H1 (cell line): ENCODE measurements at regions of chr4 and their contacts with region 1.

Region 1: GRCh38 chr4:169810325-169811323 is 52.9 kb upstream of the HPF1 start:
- DNase-seq: no peak
- H3K4me3 ChIP-seq: no peak overlapping the region
- H3K27ac ChIP-seq: no peak overlapping the region
- H3K4me1 ChIP-seq: no peaks in the 10 kb centered on the region
- H3K27me3 ChIP-seq: no peaks in the 10 kb centered on the region
- CTCF ChIP-seq: peak in 2 of 3 experiments; percentile 73 to 77; a peak in 3 of 4 replicates
- EP300 ChIP-seq: no peak
- POLR2A ChIP-seq: no peak
- RAD21 ChIP-seq: peak; percentile 84 to 88

Region 2: GRCh38 chr4:169716677-169717076 is 93.9 kb before region 1 on chr4:
- CTCF ChIA-PET with region 1: no interaction called
- POLR2A ChIA-PET with region 1: no interaction called
- DNase-seq: no peak
- H3K4me3 ChIP-seq: no peak overlapping the region
- H3K27ac ChIP-seq: no peak overlapping the region
- H3K4me1 ChIP-seq: no peaks in the 10 kb centered on the region
- H3K27me3 ChIP-seq: no peaks in the 10 kb centered on the region
- CTCF ChIP-seq: no peak
- EP300 ChIP-seq: no peak
- POLR2A ChIP-seq: no peak
- RAD21 ChIP-seq: no peak

Region 3: GRCh38 chr4:169800541-169800940 is 10.1 kb before region 1 on chr4:
- CTCF ChIA-PET with region 1: interaction called, 17 read pairs
- POLR2A ChIA-PET with region 1: no interaction called
- DNase-seq: no peak
- H3K4me3 ChIP-seq: no peak overlapping the region
- H3K27ac ChIP-seq: no peak overlapping the region
- H3K4me1 ChIP-seq: no peaks in the 10 kb centered on the region
- H3K27me3 ChIP-seq: no peaks in the 10 kb centered on the region
- CTCF ChIP-seq: no peak
- EP300 ChIP-seq: no peak
- POLR2A ChIP-seq: no peak
- RAD21 ChIP-seq: no peak

Region 4: GRCh38 chr4:169840554-169840953 is 29.9 kb after region 1 on chr4:
- CTCF ChIA-PET with region 1: interaction called, 12 read pairs
- POLR2A ChIA-PET with region 1: no interaction called
- DNase-seq: no peak
- H3K4me3 ChIP-seq: no peak overlapping the region
- H3K27ac ChIP-seq: no peak overlapping the region
- H3K4me1 ChIP-seq: no peaks in the 10 kb centered on the region
- H3K27me3 ChIP-seq: no peaks in the 10 kb centered on the region
- CTCF ChIP-seq: no peak
- EP300 ChIP-seq: no peak
- POLR2A ChIP-seq: no peak
- RAD21 ChIP-seq: no peak

Region 5: DNA sequence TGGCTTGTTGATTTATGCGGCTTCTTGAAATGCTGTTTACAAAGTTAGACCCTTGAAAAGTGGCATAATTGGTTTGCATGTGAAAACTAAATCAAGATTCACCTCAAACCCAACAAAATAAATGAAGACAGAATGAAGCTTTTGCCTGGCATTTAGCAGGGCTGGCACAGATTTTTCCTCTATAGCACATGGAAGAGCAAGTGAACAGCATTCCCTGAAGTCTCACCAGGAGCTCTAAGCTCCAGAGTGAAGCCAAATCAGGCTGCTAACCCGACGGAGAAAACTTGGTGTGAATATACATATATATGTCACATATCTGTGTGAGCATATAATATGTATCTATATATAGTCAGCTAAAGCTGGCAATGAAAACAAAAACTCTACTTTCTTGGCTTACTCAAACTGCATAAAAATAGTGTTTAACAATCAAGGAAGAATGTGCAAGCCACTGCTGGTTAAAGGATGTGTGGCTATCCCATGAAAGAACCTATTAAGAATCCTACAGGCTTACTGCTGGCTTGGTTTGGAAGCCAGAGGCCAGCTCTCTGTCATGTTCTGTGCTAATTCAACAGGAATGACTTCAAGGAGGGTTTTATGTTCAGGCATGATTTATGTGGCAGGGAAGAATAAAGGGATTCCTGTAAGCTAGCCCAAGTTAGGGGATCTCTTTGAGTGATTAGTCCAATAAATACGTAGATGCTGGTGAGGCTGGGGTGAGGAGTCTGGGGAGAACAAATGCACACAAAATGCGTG is 145.6 kb after region 1 on chr4:
- CTCF ChIA-PET with region 1: no interaction called
- POLR2A ChIA-PET with region 1: no interaction called
- DNase-seq: no peak
- H3K4me3 ChIP-seq: no peak overlapping the region
- H3K27ac ChIP-seq: no peak overlapping the region
- H3K4me1 ChIP-seq: peaks cover 0 to 9% (median 7%) of the 10 kb centered on the region in 4 experiments; a peak in 5 of 7 replicates
- H3K27me3 ChIP-seq: no peaks in the 10 kb centered on the region
- CTCF ChIP-seq: no peak
- EP300 ChIP-seq: no peak
- POLR2A ChIP-seq: no peak
- RAD21 ChIP-seq: no peak

Region 6: DNA sequence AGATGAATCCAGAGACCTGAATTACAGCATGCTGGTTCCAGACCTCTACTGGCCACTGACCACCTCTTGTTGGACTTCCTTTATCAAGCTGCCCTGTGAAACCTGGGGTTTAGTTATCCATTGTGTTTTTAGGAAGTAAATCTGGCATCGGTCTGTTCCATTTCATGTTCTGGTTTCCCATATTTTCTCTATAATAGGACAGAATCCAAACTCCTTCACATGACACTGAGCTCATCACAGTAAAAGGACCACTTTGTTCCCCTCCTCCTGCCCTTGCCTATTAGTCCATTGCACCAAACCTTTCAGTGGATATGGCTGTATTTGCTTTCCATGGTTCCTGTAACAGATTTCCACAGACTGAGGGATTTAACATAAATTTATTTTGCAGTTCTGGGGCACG is 211.6 kb after region 1 on chr4:
- CTCF ChIA-PET with region 1: interaction called, 39 read pairs
- POLR2A ChIA-PET with region 1: no interaction called
- DNase-seq: no peak
- H3K4me3 ChIP-seq: no peak overlapping the region
- H3K27ac ChIP-seq: no peak overlapping the region
- H3K4me1 ChIP-seq: peaks cover 0 to 2% (median 0%) of the 10 kb centered on the region in 4 experiments; a peak in 1 of 7 replicates
- H3K27me3 ChIP-seq: peaks cover 0 to 14% (median 7%) of the 10 kb centered on the region in 4 experiments; a peak in 5 of 7 replicates
- CTCF ChIP-seq: no peak
- EP300 ChIP-seq: no peak
- POLR2A ChIP-seq: no peak
- RAD21 ChIP-seq: no peak

Region 7: GRCh38 chr4:170047771-170048354 is 237.2 kb after region 1 on chr4:
- CTCF ChIA-PET with region 1: interaction called, 94 read pairs
- POLR2A ChIA-PET with region 1: interaction called, 4 read pairs
- DNase-seq: no peak
- H3K4me3 ChIP-seq: no peak overlapping the region
- H3K27ac ChIP-seq: no peak overlapping the region
- H3K4me1 ChIP-seq: no peaks in the 10 kb centered on the region
- H3K27me3 ChIP-seq: no peaks in the 10 kb centered on the region
- CTCF ChIP-seq: peak in 2 of 3 experiments; percentile 52 to 62; a peak in 2 of 4 replicates
- EP300 ChIP-seq: no peak
- POLR2A ChIP-seq: no peak
- RAD21 ChIP-seq: peak; percentile 78

Region 8: DNA sequence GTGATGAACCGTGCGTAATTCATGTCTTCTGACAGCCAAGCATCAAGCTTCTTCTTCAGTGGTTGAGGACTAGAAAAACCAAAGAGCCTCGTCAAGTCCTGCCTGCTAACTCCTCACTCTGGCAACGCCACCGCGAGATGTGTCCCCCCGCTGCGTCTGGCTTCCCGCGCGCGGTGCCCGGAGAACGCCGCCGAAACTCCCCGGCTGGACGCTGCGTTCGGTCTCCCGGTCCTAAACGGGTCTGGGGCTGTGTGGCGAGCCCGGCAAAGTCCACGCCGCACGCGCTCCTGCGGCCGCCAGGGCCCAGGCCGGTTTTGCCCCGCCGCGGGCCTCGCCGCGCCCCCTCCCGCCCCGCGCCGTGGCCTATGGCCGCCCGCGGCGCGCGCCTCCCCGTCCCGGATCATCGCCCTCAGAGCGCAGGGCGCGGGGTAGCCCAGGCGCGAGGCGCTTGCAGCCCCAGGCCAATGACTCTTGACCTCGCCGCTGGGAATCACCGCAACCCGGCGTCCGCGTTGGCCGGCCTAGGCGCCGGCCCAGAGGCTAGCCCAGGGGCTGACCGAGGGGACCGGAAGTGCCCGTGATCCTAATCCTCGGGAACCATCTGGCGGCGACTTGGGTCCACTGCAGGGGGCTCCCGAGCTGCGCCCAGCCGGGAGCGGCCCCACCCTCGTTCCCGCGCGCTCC is 279.2 kb after region 1 on chr4 and contains the start of gene AADAT:
- CTCF ChIA-PET with region 1: interaction called, 13 read pairs
- POLR2A ChIA-PET with region 1: no interaction called
- DNase-seq: peak; percentile 60 to 89
- H3K4me3 ChIP-seq: peak within 1 kb of the TSS; percentile 81 to 87 (median 82)
- H3K27ac ChIP-seq: peak within 1 kb of the TSS; percentile 25; the same call in 1 of the 2 replicates
- H3K4me1 ChIP-seq: peaks cover 0 to 7% (median 6%) of the 10 kb centered on the region in 4 experiments; a peak in 5 of 7 replicates
- H3K27me3 ChIP-seq: peaks cover 0 to 7% (median 4%) of the 10 kb centered on the region in 4 experiments; a peak in 4 of 7 replicates
- CTCF ChIP-seq: peak; percentile 68 to 81 (median 70)
- EP300 ChIP-seq: no peak
- POLR2A ChIP-seq: peak in 1 of 2 experiments; percentile 56; a peak in 1 of 3 replicates
- RAD21 ChIP-seq: peak; percentile 89 to 92
- total RNA-seq, gene AADAT: 7.7 and 9.2 TPM in 2 replicates

Region 9: GRCh38 chr4:170599894-170600293 is 789.3 kb after region 1 on chr4:
- CTCF ChIA-PET with region 1: no interaction called
- POLR2A ChIA-PET with region 1: no interaction called
- DNase-seq: no peak
- H3K4me3 ChIP-seq: no peak overlapping the region
- H3K27ac ChIP-seq: no peak overlapping the region
- H3K4me1 ChIP-seq: no peaks in the 10 kb centered on the region
- H3K27me3 ChIP-seq: no peaks in the 10 kb centered on the region
- CTCF ChIP-seq: no peak
- EP300 ChIP-seq: no peak
- POLR2A ChIP-seq: no peak
- RAD21 ChIP-seq: no peak